Stomach (tissue), 19 donors: ENCODE measurements at regions of chr2 and their contacts with region 1.

Region 1: GRCh38 chr2:64653349-64654062 is at the start of gene SERTAD2:
- DNase-seq: peak; percentile 91 to 96
- H3K4me3 ChIP-seq: peak within 1 kb of the TSS; percentile 73 to 89 (median 84)
- H3K27ac ChIP-seq: peak within 1 kb of the TSS; percentile 95 to 100 (median 100)
- H3K4me1 ChIP-seq: peaks cover 35 to 56% (median 46%) of the 10 kb centered on the region in 4 donors
- H3K27me3 ChIP-seq: no peaks in the 10 kb centered on the region
- CTCF ChIP-seq: no peak
- EP300 ChIP-seq: no peak
- POLR2A ChIP-seq: peak in 2 of 4 donors; percentile 23 to 29
- total RNA-seq, gene SERTAD2: 2.0 to 11.9 (median 9.3) TPM

Region 2: DNA sequence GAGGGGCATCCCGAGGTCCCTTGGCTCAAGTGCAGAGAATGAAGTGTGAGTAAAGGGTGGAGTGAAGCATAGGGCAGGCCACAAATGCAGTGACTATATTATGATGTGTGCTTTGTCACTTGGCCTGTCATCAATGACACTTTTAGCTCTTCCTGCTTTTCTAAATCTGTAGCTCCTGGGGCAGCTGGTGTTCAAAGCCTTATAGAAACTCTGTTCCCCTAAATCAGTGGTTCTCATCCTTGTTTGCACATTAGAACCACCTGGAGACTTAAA is 335.1 kb before region 1 on chr2:
- intact Hi-C with region 1: no loop called
- DNase-seq: no peak
- H3K4me3 ChIP-seq: no peak overlapping the region
- H3K27ac ChIP-seq: no peak overlapping the region
- H3K4me1 ChIP-seq: peaks cover 0 to under 1% (median under 1%) of the 10 kb centered on the region in 4 donors
- H3K27me3 ChIP-seq: peaks cover 0 to 9% (median 0%) of the 10 kb centered on the region in 3 donors
- CTCF ChIP-seq: no peak
- EP300 ChIP-seq: no peak
- POLR2A ChIP-seq: no peak

Region 3: GRCh38 chr2:64523666-64524603 is 129.6 kb before region 1 on chr2 and contains the start of gene AFTPH:
- intact Hi-C with region 1: no loop called
- DNase-seq: peak; percentile 99 to 100
- H3K4me3 ChIP-seq: peak within 1 kb of the TSS; percentile 65 to 97 (median 92)
- H3K27ac ChIP-seq: peak within 1 kb of the TSS; percentile 93 to 99 (median 98)
- H3K4me1 ChIP-seq: peaks cover 3 to 55% (median 36%) of the 10 kb centered on the region in 4 donors
- H3K27me3 ChIP-seq: no peaks in the 10 kb centered on the region
- CTCF ChIP-seq: no peak
- EP300 ChIP-seq: no peak
- POLR2A ChIP-seq: peak in 2 of 4 donors; percentile 73 to 74
- total RNA-seq, gene AFTPH: 19.8 to 93.6 (median 46.7) TPM

Region 4: DNA sequence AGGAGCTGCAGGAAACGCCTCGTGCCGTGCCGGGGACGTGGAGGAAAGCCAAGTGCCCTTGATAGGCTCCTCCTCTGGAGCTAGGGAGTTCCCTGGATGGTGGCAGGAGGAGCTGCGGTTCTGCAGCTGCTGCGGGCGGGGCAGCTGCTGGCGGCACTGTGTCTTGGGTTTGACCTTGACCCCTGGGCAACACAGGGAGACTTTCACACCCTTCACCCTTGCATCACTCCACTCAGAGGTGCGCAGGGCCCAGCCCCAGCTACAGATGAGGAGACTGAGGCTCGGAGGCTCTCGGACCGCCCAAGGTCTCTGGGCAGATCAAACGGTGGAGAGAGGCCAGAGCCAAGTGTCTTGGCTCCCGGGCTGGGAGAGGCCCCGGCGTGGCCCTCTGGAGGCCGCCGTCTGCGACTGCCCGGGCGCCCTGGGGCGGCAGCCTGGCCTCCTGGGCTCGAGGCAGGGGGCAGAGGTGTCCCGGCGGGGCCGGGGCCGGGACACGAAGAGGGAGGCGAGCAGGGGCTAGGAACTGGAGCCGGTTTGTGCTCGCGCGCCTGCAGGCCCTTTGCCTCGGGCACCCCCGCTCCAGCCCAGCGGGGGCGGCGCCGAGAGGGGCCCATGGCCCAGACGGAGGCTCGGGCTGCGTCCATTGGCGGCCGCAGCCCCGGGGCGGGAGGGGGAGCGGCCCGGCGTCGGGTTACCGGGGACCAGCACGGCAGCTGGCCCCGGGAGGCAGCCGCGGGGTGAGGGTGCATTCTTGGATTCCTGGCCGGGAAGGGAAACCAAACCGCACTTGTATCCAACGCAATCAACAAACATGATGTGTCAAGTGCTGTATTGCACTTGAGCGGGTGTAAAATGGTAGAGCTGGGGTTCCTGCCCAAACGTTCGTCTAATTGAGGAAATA is 206.1 kb after region 1 on chr2:
- intact Hi-C with region 1: loop called (anchors 5 kb)
- DNase-seq: peak; percentile 94
- H3K4me3 ChIP-seq: peak overlapping the region; percentile 40 to 52 (median 46)
- H3K27ac ChIP-seq: peak overlapping the region; percentile 83 to 93 (median 91)
- H3K4me1 ChIP-seq: peaks cover 27 to 54% (median 43%) of the 10 kb centered on the region in 4 donors
- H3K27me3 ChIP-seq: no peaks in the 10 kb centered on the region
- CTCF ChIP-seq: no peak
- EP300 ChIP-seq: no peak
- POLR2A ChIP-seq: no peak